Right lobe of liver (tissue), 6 donors: ENCODE measurements at regions of chr19 and their contacts with region 1.

Region 1: GRCh38 chr19:48842789-48843162 is 6.5 kb upstream of the HSD17B14 start:
- DNase-seq: no peak
- ATAC-seq: peak; percentile 59 to 78 (median 64)
- H3K4me3 ChIP-seq: no peak overlapping the region
- H3K27ac ChIP-seq: no peak overlapping the region
- H3K4me1 ChIP-seq: no peaks in the 10 kb centered on the region
- H3K27me3 ChIP-seq: no peaks in the 10 kb centered on the region
- CTCF ChIP-seq: peak; percentile 62 to 79 (median 76)
- POLR2A ChIP-seq: no peak

Region 2: DNA sequence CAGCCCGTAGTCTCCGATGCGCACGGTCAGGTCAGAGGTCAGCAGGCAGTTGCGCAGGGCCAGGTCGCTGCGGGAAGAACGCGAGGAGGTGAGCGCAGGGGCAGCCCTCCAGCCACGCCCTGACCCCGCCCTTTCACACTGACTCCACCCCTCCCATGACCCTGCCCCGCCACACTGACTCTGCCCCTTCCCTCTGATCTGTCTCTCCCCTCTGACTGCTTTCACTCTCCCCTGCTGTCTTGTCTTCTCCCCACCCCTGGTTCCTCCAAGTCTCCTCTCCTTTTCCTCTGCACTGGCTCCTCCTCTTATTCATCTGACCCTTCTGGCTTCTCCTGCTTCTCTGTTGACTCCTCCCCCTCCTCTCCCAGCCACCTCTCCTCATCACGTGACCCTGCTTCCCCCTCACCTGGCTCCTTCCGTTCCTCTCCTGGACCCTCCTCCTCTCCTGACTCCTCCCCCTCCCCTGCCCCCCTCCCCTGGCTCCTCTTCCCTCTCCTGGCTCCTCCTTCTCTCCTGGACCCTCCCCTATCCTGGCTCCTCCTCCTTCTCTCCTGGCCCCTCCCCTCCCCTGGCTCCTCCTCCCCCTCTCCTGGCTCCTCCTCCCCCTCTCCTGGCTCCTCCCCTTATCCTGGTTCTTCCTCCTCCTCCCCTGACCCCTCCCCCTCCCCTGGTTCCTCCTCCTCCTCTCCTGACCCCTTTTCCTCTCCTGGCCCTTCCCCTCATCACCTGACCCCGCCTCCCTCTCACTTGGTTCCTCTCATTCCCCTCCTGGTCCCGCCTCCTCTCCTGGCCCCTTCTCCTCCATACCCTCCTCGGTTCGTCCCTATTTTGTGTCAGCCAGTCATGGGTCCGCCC is 341.1 kb before region 1 on chr19:
- intact Hi-C with region 1: no loop called
- DNase-seq: peak in 2 of 3 donors; percentile 43 to 65
- ATAC-seq: peak; percentile 57 to 71 (median 66)
- H3K4me3 ChIP-seq: no peak overlapping the region
- H3K27ac ChIP-seq: no peak overlapping the region
- H3K4me1 ChIP-seq: no peaks in the 10 kb centered on the region
- H3K27me3 ChIP-seq: no peaks in the 10 kb centered on the region
- CTCF ChIP-seq: no peak
- POLR2A ChIP-seq: no peak

Region 3: GRCh38 chr19:48683349-48683748 is 159.4 kb before region 1 on chr19:
- intact Hi-C with region 1: loop called (anchors 10 kb)
- DNase-seq: no peak
- ATAC-seq: peak in 3 of 4 donors; percentile 39 to 56 (median 54)
- H3K4me3 ChIP-seq: no peak overlapping the region
- H3K27ac ChIP-seq: no peak overlapping the region
- H3K4me1 ChIP-seq: peaks cover 0 to 6% (median 3%) of the 10 kb centered on the region in 4 donors
- H3K27me3 ChIP-seq: no peaks in the 10 kb centered on the region
- CTCF ChIP-seq: no peak
- POLR2A ChIP-seq: no peak

Region 4: DNA sequence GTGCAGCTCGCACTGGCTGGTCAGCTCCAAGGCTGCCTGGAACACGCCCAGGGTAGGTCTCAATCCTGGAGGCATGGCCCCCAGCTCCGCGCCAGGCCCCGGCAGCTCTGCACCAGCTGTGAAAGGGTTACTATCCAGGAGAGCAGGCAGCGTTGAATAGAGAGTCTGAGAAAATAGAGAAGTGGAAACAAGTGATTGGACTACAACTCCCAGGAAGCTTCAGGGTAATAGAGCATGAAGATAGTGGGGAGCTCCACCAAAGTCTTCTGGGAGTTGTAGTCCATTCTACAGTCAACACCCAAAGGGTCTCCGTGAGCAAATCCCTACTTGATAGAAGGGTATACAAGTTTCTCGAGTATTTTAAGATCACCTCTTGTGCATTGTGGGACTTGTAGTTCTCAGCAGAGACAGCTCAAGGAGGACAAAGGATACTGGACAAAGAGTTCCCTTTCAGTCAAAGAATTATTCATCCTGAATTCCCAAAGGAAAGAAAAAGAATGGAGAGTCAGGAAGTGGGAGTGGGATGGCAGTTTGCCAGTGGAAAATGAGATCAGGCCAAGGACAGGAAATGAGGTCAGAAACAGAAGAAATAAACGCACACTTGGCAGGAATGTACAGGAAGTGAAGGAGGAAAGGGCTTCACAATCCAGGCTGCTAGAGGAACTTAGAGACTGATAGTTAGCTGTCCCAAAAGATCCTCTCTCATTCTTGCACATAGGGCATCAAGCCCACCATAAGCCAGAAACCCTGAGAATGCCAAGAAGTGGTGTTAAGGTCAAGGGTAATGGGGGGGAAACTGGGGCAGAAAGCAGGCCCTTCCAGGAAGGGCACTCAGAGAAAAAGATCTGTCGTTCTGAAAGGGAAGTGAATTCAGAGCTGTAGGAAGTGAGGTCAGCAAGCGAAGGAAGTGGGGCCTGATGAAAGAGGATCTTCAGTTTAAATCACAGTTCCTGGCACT is 117.7 kb before region 1 on chr19:
- intact Hi-C with region 1: no loop called
- DNase-seq: no peak
- ATAC-seq: peak; percentile 17 to 36 (median 28)
- H3K4me3 ChIP-seq: no peak overlapping the region
- H3K27ac ChIP-seq: peak overlapping the region; percentile 50 to 64 (median 55)
- H3K4me1 ChIP-seq: no peaks in the 10 kb centered on the region
- H3K27me3 ChIP-seq: no peaks in the 10 kb centered on the region
- CTCF ChIP-seq: no peak
- POLR2A ChIP-seq: no peak

Region 5: DNA sequence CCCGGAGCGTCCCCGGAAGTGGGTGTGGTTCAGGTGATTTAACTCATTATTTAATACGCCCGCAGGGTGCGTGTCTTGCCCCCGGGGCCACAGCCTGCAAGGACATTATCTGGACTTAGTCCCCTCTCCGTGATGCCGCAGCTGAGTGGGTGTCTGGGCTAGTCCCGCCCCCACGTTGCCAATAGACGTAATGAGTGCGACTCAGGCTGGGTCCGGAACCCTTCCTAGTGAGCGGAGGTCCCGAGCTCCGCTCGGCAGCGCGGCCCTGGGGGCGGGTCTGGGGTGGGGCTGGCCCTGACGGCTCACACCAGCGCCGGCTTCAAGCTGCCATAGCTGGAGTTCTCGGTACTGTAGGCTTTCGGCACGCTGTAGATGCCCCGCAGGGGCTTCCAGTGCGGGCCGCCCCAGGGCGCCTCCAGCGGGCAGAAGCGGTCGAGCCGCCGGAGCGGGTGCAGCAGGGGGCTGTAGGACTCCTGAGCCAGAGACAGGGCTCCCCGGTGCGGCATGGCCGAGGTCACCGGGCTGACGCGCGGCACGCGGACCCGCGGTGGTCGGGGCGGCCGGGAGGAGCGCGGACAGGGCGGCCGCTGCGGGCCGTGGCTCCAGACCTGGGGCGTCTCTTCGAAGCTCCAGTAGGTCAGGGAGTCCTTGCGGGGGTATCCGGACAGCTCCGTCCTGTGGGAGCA is 175.0 kb after region 1 on chr19:
- intact Hi-C with region 1: no loop called
- DNase-seq: peak in 1 of 3 donors; percentile 57
- ATAC-seq: peak; percentile 51 to 64 (median 56)
- H3K4me3 ChIP-seq: peak overlapping the region; percentile 30 to 39 (median 36)
- H3K27ac ChIP-seq: no peak overlapping the region
- H3K4me1 ChIP-seq: peaks cover 0 to 18% (median 0%) of the 10 kb centered on the region in 4 donors
- H3K27me3 ChIP-seq: no peaks in the 10 kb centered on the region
- CTCF ChIP-seq: peak; percentile 32 to 46 (median 39)
- POLR2A ChIP-seq: no peak